ENCODE measurements at regions of chrX and their contacts with region 1.

Region 1: GRCh38 chrX:154411322-154411980 is at the start of gene TAFAZZIN:
- DNase-seq: peak; percentile 59 to 72
- ATAC-seq: peak; percentile 44 to 50
- H3K4me3 ChIP-seq: peak within 1 kb of the TSS; percentile 67 to 90 (median 78)
- H3K27ac ChIP-seq: peak within 1 kb of the TSS; percentile 91 to 98 (median 98)
- H3K4me1 ChIP-seq: peaks cover 12 to 32% of the 10 kb centered on the region in 2 donors
- H3K27me3 ChIP-seq: no peaks in the 10 kb centered on the region
- CTCF ChIP-seq: no peak
- POLR2A ChIP-seq: peak; percentile 71 to 82
- total RNA-seq, gene TAFAZZIN: 17.6 to 28.3 (median 20.1) TPM

Region 2: DNA sequence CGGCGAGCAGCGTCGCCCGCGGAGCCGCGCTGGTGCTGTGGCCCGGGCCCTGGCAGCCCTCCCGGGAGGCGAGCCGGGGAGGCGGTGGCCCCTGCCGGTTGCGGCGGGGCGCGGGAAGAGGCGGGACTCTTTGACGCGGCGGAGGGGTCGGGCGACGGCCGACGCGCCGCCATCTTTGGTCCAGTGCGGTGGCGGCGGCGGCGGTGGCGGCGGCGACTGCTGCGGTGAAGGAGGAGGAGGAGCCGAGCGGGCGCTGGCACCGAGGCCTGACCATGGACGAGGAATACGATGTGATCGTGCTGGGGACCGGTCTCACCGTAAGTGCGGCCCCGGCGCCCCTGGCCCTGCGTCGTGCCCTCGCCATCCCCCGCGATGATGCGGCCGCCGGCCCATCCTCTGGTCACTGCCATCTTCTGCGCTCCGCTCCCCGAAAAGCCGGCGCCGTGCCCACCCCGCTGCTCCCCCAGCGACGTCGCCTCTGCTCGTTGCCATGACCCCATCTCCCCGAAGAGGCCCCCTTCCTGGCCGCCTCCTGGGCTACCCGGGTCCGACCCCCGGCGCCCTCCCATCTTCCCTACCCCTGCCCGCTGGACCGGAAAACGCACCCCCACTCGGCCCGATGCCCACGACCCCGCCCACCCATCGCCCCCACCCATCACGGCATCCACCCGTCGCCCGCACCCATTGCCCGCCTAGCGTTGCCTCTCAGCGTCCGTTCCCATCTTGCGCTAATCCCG is 25.7 kb after region 1 on chrX and contains the start of gene GDI1:
- in situ Hi-C with region 1: no loop called
- intact Hi-C with region 1: loop called (anchors 2 kb)
- DNase-seq: peak in 1 of 2 donors; percentile 36
- ATAC-seq: peak; percentile 72 to 75
- H3K4me3 ChIP-seq: peak within 1 kb of the TSS; percentile 64 to 84 (median 66)
- H3K27ac ChIP-seq: peak within 1 kb of the TSS; percentile 79 to 88 (median 82)
- H3K4me1 ChIP-seq: peaks cover 0 to 5% of the 10 kb centered on the region in 2 donors
- H3K27me3 ChIP-seq: no peaks in the 10 kb centered on the region
- CTCF ChIP-seq: no peak
- POLR2A ChIP-seq: peak; percentile 49 to 62
- total RNA-seq, gene GDI1: 19.8 to 54.5 (median 39.0) TPM

Region 3: DNA sequence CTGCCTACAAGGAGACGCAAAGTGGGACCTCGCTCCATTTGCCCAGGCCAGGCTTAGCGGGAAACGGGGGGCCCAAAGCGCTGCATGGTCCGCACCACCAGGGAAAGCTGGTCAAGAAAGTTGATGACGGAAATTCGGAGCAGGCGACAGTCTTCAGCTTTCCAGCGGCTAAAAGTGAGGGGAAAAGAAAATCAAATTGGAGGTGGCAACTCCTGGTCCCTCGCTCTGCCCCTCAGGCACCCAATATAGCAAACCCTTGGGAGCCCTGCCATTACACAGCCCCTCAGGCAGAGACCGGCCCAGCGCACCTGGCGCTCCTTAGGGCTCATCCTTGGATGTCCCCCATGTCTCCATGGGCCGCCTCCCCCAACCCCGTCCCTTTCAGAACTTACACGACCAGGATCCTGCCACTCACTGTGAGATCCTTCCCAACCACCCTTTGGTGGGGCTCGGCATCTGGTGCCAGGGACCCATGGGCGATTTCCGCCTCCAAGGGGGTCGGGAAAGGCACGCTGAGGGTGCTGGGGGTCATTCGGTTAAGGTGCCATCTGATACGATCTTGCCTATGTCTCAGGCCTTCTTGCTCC is 66.5 kb after region 1 on chrX:
- in situ Hi-C with region 1: no loop called
- intact Hi-C with region 1: no loop called
- DNase-seq: no peak
- ATAC-seq: no peak
- H3K4me3 ChIP-seq: peak overlapping the region; percentile 58 to 70 (median 62)
- H3K27ac ChIP-seq: peak overlapping the region; percentile 88 to 94 (median 92)
- H3K4me1 ChIP-seq: peaks cover 0 to 6% of the 10 kb centered on the region in 2 donors
- H3K27me3 ChIP-seq: no peaks in the 10 kb centered on the region
- CTCF ChIP-seq: no peak
- POLR2A ChIP-seq: no peak

Region 4: DNA sequence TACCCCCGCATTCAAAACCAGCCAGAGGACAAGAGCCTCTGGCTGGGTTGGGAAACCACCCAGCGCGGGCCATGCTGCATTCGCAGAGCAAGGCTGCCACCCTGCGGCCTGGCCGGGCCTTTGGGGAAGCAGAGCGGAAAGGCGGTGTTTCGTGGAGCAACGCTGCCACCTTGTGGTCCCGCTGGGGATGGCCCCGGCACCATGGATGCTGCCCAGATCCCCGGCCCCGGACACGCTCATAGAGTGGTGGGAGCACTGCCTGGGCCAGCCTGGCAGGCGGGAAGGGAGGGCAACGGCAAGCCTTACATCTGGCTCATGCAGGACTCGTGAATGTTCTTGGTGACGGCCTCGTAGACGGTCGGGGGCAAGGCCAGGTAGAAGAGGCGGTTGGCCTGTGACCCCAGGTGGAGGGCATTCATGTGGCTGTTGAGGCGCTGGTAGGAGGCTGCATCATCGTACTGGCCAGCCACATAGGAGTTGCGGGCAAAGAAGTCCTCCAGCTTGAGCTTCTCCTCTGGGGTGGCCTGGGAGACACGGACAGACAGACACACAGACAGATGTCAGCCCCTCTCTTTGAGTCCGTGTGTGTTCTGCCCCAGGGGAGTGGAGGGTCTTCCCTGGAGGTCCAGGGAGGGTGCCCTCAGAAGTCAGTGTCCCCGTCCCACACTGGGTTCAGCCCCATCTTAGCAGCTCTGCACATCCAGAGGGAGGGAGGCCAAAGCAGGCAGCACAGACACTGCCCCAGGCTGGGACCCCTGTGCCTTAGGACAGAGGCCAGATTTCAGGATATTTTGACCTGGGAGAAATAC is 123.6 kb after region 1 on chrX:
- in situ Hi-C with region 1: loop called in 2 of 4 experiments (anchors 25 kb)
- intact Hi-C with region 1: no loop called
- DNase-seq: peak; percentile 60 to 80
- ATAC-seq: peak; percentile 94 to 97
- H3K4me3 ChIP-seq: no peak overlapping the region
- H3K27ac ChIP-seq: peak overlapping the region in 3 of 4 donors; percentile 19 to 64 (median 64)
- H3K4me1 ChIP-seq: peaks cover 0 to 8% of the 10 kb centered on the region in 2 donors
- H3K27me3 ChIP-seq: no peaks in the 10 kb centered on the region
- CTCF ChIP-seq: peak; percentile 94 to 99 (median 98)
- POLR2A ChIP-seq: no peak

Measured in gastrocnemius medialis (tissue), 4 donors.